ENCODE measurements at regions of chr12 and their contacts with region 1.

Region 1: GRCh38 chr12:27434673-27435565 is 11.6 kb upstream of the SMCO2 start:
- DNase-seq: peak; percentile 15
- H3K4me3 Mint-ChIP-seq: no peak overlapping the region
- H3K27ac Mint-ChIP-seq: no peak overlapping the region
- H3K4me1 Mint-ChIP-seq: peaks cover 10% of the 10 kb centered on the region
- H3K27me3 Mint-ChIP-seq: peaks cover 15% of the 10 kb centered on the region

Region 2: DNA sequence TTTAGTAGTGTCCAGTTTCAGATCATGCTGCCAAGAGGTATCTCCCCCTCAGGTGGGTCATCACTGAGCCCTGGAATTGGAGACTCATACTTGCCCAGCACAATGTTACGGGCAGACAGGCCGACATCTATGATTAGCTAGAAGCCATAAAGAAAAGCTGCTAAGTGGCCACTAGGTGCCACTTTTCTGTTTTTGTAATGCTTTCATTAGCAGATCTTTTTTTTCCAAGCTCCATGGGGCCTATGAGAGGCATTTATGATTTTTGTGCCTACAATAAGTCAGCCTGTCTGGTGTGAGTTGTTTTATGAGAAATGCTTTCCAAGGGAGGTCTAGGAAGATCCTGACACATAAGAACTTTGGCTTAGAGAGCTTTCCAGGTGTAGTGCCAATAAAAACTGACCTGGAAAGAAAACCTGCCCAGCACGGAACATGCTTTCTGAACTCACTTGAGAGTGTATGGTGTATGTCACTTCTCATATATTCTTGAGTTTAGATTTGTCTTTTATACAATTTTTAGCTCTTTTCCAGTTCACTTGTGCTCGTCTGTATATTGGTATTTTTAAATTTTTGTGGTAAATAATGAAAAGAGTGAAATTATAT is 10.2 kb before region 1 on chr12:
- CTCF ChIA-PET with region 1: interaction called, 11 read pairs
- POLR2A ChIA-PET with region 1: no interaction called
- intact Hi-C with region 1: no loop called
- DNase-seq: no peak
- H3K4me3 Mint-ChIP-seq: no peak overlapping the region
- H3K27ac Mint-ChIP-seq: no peak overlapping the region
- H3K4me1 Mint-ChIP-seq: peaks cover 2% of the 10 kb centered on the region
- H3K27me3 Mint-ChIP-seq: peaks cover 2% of the 10 kb centered on the region

Region 3: GRCh38 chr12:27523642-27524493 is 88.9 kb after region 1 on chr12 and contains the start of gene PPFIBP1:
- CTCF ChIA-PET with region 1: interaction called, 16 read pairs
- POLR2A ChIA-PET with region 1: no interaction called
- intact Hi-C with region 1: no loop called
- DNase-seq: peak; percentile 99
- H3K4me3 Mint-ChIP-seq: peak within 1 kb of the TSS; percentile 93
- H3K27ac Mint-ChIP-seq: peak within 1 kb of the TSS; percentile 79
- H3K4me1 Mint-ChIP-seq: peaks cover 18% of the 10 kb centered on the region
- H3K27me3 Mint-ChIP-seq: peaks cover 8% of the 10 kb centered on the region
- total RNA-seq, gene PPFIBP1: 14.1 to 14.9 TPM

Region 4: DNA sequence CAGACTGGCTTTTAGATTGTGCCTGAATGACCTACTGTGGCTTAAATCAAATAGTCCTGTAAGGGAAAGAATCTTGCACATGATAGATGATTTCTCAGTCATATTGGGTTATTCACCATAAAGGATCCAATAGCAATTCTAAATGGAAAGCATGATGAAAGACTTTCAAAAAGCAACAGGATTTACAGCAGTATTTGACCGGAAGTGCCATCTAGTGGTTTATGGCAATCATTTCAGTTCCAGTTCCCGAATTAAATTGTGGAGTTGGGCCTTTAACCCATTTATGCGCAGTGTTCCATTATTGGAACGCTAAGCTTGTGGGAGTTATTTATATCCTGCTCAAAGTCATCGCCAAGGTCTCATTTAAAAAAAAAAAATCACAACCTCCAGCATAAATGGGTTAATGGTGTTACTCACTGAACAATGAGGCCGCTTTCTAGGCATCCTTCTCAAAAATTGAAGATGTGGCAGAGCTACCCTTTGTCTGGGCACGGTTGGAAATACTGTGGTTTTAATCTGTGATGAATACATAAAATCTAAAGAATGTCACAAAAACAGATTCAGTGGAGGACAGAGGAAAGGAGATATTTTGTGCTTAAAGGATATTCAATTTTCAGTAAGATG is 200.5 kb after region 1 on chr12:
- CTCF ChIA-PET with region 1: interaction called, 11 read pairs
- POLR2A ChIA-PET with region 1: no interaction called
- intact Hi-C with region 1: loop called (anchors 1 kb)
- DNase-seq: no peak
- H3K4me3 Mint-ChIP-seq: no peak overlapping the region
- H3K27ac Mint-ChIP-seq: no peak overlapping the region
- H3K4me1 Mint-ChIP-seq: no peaks in the 10 kb centered on the region
- H3K27me3 Mint-ChIP-seq: no peaks in the 10 kb centered on the region

Region 5: DNA sequence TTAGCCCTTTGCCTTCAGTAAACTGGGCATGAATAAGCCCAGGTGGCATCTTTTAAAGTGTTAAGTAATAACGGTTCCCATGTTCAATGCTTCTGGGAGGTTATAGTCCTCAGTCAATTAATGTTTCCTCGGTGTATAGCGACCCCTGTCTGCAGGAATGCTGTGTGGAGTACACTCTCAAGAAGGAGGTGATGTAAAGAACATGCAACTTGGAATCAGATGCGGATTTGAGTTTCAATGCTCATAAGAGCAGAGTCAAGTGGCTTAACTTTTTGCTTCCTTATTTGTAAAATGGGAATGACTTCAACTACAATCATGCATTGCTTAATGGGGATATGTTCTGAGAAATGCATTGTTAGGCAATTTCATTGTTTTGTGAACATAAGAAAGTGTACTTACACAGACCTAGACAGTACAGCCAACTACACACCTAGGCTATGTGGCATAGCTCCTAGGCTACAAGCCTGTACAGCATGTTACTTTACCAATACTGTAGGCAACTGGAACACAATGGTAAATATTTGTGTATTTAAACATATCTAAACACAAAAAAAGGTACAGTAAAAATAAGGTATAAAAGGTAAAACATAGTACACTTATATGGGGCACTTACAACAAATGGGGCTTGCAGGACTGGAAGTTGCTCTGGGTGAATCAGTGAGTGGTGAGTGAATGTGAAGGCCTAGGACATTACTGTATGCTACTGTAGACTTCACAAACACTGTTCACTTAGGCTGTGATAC is 269.0 kb after region 1 on chr12:
- CTCF ChIA-PET with region 1: interaction called, 19 read pairs
- POLR2A ChIA-PET with region 1: no interaction called
- intact Hi-C with region 1: loop called (anchors 1 kb)
- DNase-seq: peak; percentile 80
- H3K4me3 Mint-ChIP-seq: no peak overlapping the region
- H3K27ac Mint-ChIP-seq: no peak overlapping the region
- H3K4me1 Mint-ChIP-seq: peaks cover 2% of the 10 kb centered on the region
- H3K27me3 Mint-ChIP-seq: peaks cover 9% of the 10 kb centered on the region

Measured in activated CD4-positive, alpha-beta memory T cell treated with anti-CD3 and anti-CD28 coated beads for 36 hours (primary cell).